ENCODE measurements at regions of chr12 and their contacts with region 1.

Region 1: DNA sequence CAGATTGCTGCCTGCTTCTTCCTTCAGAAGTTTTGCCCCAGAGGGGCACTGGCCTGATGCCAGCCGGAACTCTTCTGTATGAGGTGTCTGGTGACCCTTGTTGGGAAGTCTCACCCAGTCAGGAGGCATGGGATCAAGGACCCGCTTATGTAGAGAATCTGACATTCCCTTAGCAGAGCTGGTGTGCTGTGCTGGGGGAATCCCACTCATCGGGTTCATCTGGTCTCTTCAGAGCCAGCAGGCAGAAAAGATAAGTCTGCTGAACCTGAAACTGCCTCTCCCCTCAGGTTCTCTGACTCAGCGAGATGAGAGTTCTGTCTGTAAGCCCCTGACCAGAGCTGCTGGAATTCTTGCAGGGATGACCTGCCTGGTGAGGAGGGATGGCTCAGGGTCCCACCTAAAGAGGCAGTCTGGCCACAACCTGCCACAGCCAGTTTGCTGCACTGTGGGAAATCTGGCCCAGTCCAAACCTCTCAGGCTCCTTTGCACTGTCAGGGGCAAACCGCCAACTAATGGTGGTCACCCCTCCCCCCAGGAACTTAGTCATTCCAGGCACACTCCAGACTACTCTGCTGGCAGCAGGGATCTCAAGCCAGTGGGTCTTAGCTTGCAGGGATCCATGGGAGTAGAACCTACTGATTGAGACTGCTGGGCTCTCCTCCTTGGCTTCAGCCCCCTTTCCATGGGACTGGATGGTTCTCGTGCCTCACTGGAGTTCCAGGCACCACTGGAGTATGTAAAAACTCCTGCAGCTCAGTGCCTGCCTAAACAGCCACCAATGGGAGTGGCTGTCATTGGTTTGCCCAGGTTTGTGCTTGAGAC is 4.1 kb downstream of the CLEC2D start:
- DNase-seq: peak; percentile 90
- ATAC-seq: peak; percentile 41
- H3K4me3 Mint-ChIP-seq: peak overlapping the region; percentile 94
- H3K27ac Mint-ChIP-seq: peak overlapping the region; percentile 99
- H3K4me1 Mint-ChIP-seq: peaks cover 35% of the 10 kb centered on the region
- H3K27me3 Mint-ChIP-seq: no peaks in the 10 kb centered on the region
- CTCF ChIP-seq: no peak

Region 2: DNA sequence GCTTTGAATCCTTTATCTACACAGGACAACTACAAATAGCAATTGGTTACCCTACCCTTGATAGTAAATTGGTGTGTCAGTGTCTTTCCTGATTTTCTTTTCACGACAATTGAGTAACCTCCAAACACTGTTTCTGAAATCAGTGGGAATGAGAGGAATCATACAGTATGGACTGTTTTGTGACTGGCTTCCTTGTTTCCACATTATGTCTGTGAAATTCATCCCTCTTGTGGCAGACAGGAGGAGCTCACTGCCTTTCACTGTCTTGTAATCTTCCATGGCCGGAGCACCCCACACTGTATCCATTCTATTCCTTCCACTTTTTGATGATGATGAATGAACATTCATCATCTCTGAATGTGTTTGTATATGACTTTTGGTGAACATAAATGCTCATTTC is 301.4 kb before region 1 on chr12:
- CTCF ChIA-PET with region 1: no interaction called
- POLR2A ChIA-PET with region 1: no interaction called
- intact Hi-C with region 1: no loop called
- DNase-seq: no peak
- ATAC-seq: no peak
- H3K4me3 Mint-ChIP-seq: no peak overlapping the region
- H3K27ac Mint-ChIP-seq: no peak overlapping the region
- H3K4me1 Mint-ChIP-seq: peaks cover 10% of the 10 kb centered on the region
- H3K27me3 Mint-ChIP-seq: no peaks in the 10 kb centered on the region
- CTCF ChIP-seq: no peak

Region 3: GRCh38 chr12:9604287-9604686 is 69.3 kb before region 1 on chr12:
- CTCF ChIA-PET with region 1: no interaction called
- POLR2A ChIA-PET with region 1: no interaction called
- intact Hi-C with region 1: no loop called
- DNase-seq: no peak
- ATAC-seq: peak; percentile 45
- H3K4me3 Mint-ChIP-seq: peak overlapping the region; percentile 9
- H3K27ac Mint-ChIP-seq: peak overlapping the region; percentile 60
- H3K4me1 Mint-ChIP-seq: peaks cover 9% of the 10 kb centered on the region
- H3K27me3 Mint-ChIP-seq: no peaks in the 10 kb centered on the region
- CTCF ChIP-seq: no peak

Region 4: GRCh38 chr12:9647825-9648700 is 25.6 kb before region 1 on chr12:
- CTCF ChIA-PET with region 1: interaction called, 13 read pairs
- POLR2A ChIA-PET with region 1: interaction called, 745 read pairs
- intact Hi-C with region 1: loop called (anchors 1 kb)
- DNase-seq: peak; percentile 95
- ATAC-seq: peak; percentile 72
- H3K4me3 Mint-ChIP-seq: peak overlapping the region; percentile 98
- H3K27ac Mint-ChIP-seq: peak overlapping the region; percentile 99
- H3K4me1 Mint-ChIP-seq: peaks cover 53% of the 10 kb centered on the region
- H3K27me3 Mint-ChIP-seq: no peaks in the 10 kb centered on the region
- CTCF ChIP-seq: no peak

Region 5: DNA sequence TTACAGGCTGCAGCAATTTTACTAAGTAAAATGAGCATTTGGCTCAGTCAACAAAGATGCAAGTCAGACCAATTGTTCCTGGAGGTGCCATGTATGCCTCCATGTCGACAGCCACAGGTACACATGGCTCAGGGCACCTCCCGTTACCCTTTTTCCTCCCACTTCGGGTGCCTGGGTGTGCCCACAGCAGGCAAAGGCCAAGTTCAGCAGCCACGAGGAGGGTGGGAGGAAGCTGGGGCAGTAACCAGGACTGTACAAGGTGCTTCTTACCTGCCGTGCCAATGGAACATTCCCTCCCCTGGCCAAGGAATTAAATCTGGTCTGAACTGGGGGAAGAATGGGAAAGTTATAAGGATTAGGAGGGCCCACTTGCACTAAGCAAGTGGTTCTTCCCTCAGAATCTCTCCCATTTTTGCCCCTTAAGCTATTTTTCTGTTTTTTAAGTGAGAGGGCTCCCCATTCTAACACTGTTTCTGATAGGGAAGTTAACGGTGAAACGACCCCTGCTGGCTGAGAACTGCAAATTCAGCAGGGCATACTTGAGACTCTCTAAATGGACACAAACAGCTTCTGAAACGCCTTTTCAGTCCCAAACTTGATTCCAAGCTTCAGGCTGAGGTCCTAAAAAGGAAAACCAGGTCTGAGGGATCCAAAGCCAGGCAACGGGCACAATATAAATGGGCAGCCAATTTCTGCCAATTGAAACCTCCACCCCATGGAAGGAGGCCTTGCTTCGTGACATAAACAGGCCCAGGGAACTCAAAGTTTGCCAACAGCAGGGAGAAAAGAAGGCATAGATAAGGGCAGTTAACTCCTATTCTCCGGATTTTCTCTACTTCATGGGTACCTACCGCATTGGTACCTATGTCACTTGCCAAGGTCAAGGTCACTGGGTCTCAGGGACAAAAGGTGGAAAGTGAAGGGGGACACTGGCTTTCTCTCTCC is 34.5 kb after region 1 on chr12:
- CTCF ChIA-PET with region 1: interaction called, 18 read pairs
- POLR2A ChIA-PET with region 1: interaction called, 10 read pairs
- intact Hi-C with region 1: no loop called
- DNase-seq: peak; percentile 80
- ATAC-seq: peak; percentile 89
- H3K4me3 Mint-ChIP-seq: peak overlapping the region; percentile 61
- H3K27ac Mint-ChIP-seq: peak overlapping the region; percentile 92
- H3K4me1 Mint-ChIP-seq: peaks cover 46% of the 10 kb centered on the region
- H3K27me3 Mint-ChIP-seq: no peaks in the 10 kb centered on the region
- CTCF ChIP-seq: peak; percentile 81

Region 6: GRCh38 chr12:9719790-9720189 is 46.2 kb after region 1 on chr12:
- CTCF ChIA-PET with region 1: no interaction called
- POLR2A ChIA-PET with region 1: no interaction called
- intact Hi-C with region 1: no loop called
- DNase-seq: peak; percentile 19
- ATAC-seq: peak; percentile 79
- H3K4me3 Mint-ChIP-seq: no peak overlapping the region
- H3K27ac Mint-ChIP-seq: no peak overlapping the region
- H3K4me1 Mint-ChIP-seq: peaks cover 39% of the 10 kb centered on the region
- H3K27me3 Mint-ChIP-seq: peaks cover 4% of the 10 kb centered on the region
- CTCF ChIP-seq: no peak

Region 7: DNA sequence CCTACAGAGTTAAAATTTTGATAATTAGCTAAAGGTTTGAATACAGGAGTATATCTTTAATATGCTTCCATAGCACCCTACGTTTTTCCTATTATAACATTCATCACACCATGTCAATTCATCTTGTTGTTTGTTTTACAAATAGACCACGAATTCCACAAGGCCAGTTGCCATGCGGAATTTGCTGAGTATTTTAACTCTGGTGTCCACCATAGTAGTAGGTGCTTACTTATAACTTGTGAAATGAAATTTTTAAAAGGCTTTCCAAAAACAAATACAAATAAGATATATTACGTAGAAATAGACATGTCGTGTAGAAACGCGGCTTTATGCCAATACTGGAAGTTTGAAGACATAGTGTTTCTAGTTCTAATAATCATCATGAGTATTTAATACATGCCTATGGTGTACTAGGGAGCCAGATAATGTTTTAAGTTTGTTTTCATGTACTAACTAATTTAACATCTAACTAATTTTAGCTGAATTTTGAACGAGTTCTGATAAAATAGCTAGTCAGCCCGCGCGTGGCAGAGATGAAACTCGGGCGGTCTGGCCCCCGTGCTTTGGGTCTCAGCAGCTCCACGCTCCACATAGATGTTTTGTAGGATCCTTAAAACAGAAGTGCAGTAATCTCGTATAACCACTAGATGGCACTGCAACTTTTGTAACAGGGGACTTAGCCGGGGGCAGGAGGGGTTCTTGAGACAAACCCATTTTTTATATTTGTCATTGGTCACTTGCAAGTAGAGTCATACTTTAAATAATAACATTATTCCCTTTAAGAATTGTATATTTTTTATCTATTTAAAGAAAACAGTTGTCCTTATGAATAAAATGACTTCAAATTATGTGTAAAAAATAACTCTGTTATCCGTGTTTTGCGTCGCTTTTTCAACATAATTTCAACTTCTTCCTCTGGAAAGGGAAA is 76.9 kb after region 1 on chr12:
- CTCF ChIA-PET with region 1: interaction called, 6 read pairs
- POLR2A ChIA-PET with region 1: interaction called, 752 read pairs
- intact Hi-C with region 1: no loop called
- DNase-seq: peak; percentile 73
- ATAC-seq: peak; percentile 66
- H3K4me3 Mint-ChIP-seq: peak overlapping the region; percentile 67
- H3K27ac Mint-ChIP-seq: peak overlapping the region; percentile 86
- H3K4me1 Mint-ChIP-seq: peaks cover 57% of the 10 kb centered on the region
- H3K27me3 Mint-ChIP-seq: no peaks in the 10 kb centered on the region
- CTCF ChIP-seq: peak; percentile 78

Region 8: DNA sequence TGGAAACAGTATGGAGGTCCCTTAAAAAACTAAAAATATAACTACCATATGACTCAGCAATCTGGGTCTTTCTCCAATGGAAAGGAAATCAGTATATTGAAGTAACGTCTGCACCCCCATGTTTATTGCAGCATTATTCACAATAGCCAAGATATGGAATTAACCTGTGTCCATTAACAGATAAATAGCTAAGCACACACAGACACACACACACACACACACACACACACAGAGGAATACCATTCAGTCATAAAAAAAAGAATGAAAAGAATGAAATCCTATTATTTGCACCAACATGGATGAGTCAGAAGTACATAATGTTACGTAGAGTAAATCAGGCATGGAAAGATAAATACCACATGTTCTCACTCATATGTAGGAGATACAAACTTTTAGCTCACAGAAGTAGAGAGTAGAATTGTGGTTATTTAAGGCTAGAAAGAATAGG is 711.6 kb after region 1 on chr12:
- CTCF ChIA-PET with region 1: no interaction called
- POLR2A ChIA-PET with region 1: interaction called, 16 read pairs
- intact Hi-C with region 1: loop called (anchors 10 kb)
- DNase-seq: no peak
- ATAC-seq: peak; percentile 68
- H3K4me3 Mint-ChIP-seq: peak overlapping the region; percentile 90
- H3K27ac Mint-ChIP-seq: peak overlapping the region; percentile 92
- H3K4me1 Mint-ChIP-seq: peaks cover 47% of the 10 kb centered on the region
- H3K27me3 Mint-ChIP-seq: no peaks in the 10 kb centered on the region
- CTCF ChIP-seq: no peak